T-cell (primary cell): ENCODE measurements at regions of chr12 and their contacts with region 1.

Region 1: GRCh38 chr12:51341259-51342007 is 5.0 kb downstream of the CELA1 start:
- DNase-seq: peak; percentile 33 to 86 (median 63)
- ATAC-seq: peak; percentile 87 to 95 (median 89)
- H3K4me3 ChIP-seq: no peak overlapping the region
- H3K4me3 Mint-ChIP-seq: peak overlapping the region in 2 of 3 donors; percentile 49 to 67
- H3K27ac ChIP-seq: peak overlapping the region; percentile 33
- H3K27ac Mint-ChIP-seq: peak overlapping the region; percentile 68 to 85
- H3K4me1 ChIP-seq: peaks cover 3 to 15% of the 10 kb centered on the region in 2 experiments
- H3K4me1 Mint-ChIP-seq: peaks cover 7 to 28% (median 8%) of the 10 kb centered on the region in 3 donors
- H3K27me3 ChIP-seq: peaks cover 0 to 5% of the 10 kb centered on the region in 2 experiments
- H3K27me3 Mint-ChIP-seq: no peaks in the 10 kb centered on the region

Region 2: GRCh38 chr12:50825372-50825838 is 516.0 kb before region 1 on chr12:
- CTCF ChIA-PET with region 1: interaction called in 1 of 2 experiments, 14 read pairs
- POLR2A ChIA-PET with region 1: no interaction called
- DNase-seq: peak in 1 of 35 experiments; percentile 77
- ATAC-seq: peak; percentile 59 to 93 (median 66)
- H3K4me3 ChIP-seq: no peak overlapping the region
- H3K4me3 Mint-ChIP-seq: no peak overlapping the region
- H3K27ac ChIP-seq: peak overlapping the region; percentile 65
- H3K27ac Mint-ChIP-seq: peak overlapping the region; percentile 39 to 80
- H3K4me1 ChIP-seq: peaks cover 2 to 3% of the 10 kb centered on the region in 2 experiments
- H3K4me1 Mint-ChIP-seq: peaks cover 6 to 10% (median 6%) of the 10 kb centered on the region in 3 donors
- H3K27me3 ChIP-seq: no peaks in the 10 kb centered on the region
- H3K27me3 Mint-ChIP-seq: no peaks in the 10 kb centered on the region

Region 3: DNA sequence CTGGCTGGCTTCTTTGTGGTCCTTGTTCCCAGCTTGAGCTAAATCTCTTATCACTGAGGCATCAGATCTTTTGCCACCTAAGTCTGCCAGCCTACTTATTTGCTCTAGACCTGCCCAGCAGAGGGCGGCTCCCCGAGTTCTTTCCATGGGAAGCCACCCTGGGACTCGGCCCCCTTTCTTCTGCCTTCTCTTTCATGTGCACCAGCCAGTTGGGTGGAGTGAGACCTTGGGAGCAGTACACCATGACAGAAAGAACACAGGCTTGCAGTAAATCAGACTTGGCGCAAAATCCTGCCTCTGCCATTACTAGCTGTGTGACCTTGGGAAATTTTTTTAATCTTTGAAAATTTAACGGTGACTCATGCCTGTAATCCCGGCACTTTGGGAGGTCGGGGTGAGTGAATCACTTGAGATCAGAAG is 78.7 kb before region 1 on chr12:
- CTCF ChIA-PET with region 1: interaction called, 3 to 10 read pairs
- POLR2A ChIA-PET with region 1: interaction called in 1 of 2 experiments, 3 read pairs
- DNase-seq: peak in 10 of 35 experiments; percentile 12 to 54 (median 26)
- ATAC-seq: peak in 3 of 4 experiments; percentile 38 to 55 (median 53)
- H3K4me3 ChIP-seq: no peak overlapping the region
- H3K4me3 Mint-ChIP-seq: no peak overlapping the region
- H3K27ac ChIP-seq: no peak overlapping the region
- H3K27ac Mint-ChIP-seq: no peak overlapping the region
- H3K4me1 ChIP-seq: peaks cover 0 to 3% of the 10 kb centered on the region in 2 experiments
- H3K4me1 Mint-ChIP-seq: peaks cover 16 to 24% (median 22%) of the 10 kb centered on the region in 3 donors
- H3K27me3 ChIP-seq: no peaks in the 10 kb centered on the region
- H3K27me3 Mint-ChIP-seq: no peaks in the 10 kb centered on the region

Region 4: GRCh38 chr12:51270067-51270970 is 71.1 kb before region 1 on chr12 and contains the start of gene SMAGP:
- CTCF ChIA-PET with region 1: interaction called, 3 to 30 read pairs
- POLR2A ChIA-PET with region 1: interaction called in 1 of 2 experiments, 3 read pairs
- DNase-seq: peak in 31 of 35 experiments; percentile 7 to 61 (median 30)
- ATAC-seq: peak; percentile 58 to 66 (median 61)
- H3K4me3 ChIP-seq: peak within 1 kb of the TSS; percentile 66 to 79
- H3K4me3 Mint-ChIP-seq: peak within 1 kb of the TSS; percentile 86 to 93 (median 91)
- H3K27ac ChIP-seq: peak within 1 kb of the TSS; percentile 57
- H3K27ac Mint-ChIP-seq: peak within 1 kb of the TSS; percentile 86 to 90
- H3K4me1 ChIP-seq: peaks cover 8 to 22% of the 10 kb centered on the region in 2 experiments
- H3K4me1 Mint-ChIP-seq: peaks cover 26 to 35% (median 27%) of the 10 kb centered on the region in 3 donors
- H3K27me3 ChIP-seq: no peaks in the 10 kb centered on the region
- H3K27me3 Mint-ChIP-seq: no peaks in the 10 kb centered on the region
- total RNA-seq, gene SMAGP: 3.2 to 5.3 (median 3.6) TPM

Region 5: DNA sequence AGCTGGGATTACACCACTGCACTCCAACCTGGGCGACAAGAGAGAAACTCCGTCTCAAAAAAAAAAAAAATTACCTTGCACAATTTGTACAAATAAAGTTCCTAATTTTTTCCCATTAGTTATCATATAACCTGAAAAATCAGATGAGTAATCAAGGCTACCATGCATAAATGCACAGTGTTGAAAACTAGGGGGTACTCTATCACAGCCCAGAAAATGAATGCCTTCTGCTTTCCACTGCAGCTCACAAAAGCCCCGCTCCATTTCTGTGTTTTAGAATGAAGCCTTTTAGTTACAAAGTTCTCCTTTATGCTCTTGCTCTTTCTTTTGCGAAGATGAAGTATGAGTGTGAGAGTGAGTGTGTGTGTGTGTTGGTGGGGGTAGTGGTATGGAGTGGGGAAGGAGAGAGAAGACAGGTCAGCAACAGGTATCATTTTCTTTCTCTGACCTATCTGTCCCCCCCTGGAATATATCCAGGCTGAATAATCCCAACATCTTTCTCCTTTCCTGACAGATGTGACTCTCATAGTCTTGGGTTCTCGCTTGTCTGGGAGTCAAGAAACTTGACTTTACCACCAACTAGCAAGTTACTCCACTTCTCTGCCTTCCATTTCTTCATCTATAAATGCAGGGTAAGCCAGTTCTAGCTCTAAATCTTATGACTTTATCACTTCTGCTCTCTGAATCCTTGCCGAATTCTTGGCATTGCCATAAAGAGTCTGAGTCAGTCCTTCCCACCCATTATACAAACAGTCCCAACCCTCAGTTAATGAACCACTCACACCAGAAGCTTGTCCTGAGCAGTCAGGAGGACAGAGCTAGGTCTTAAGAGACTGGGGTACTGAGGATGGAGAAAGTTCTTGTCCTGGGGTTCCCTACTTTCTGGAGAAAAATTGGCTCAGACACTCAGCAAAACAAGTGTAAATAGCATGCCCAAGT is 33.5 kb before region 1 on chr12:
- CTCF ChIA-PET with region 1: interaction called, 7 to 13 read pairs
- POLR2A ChIA-PET with region 1: interaction called in 1 of 2 experiments, 6 read pairs
- DNase-seq: peak in 1 of 35 experiments; percentile 39
- ATAC-seq: peak in 3 of 4 experiments; percentile 53 to 73 (median 55)
- H3K4me3 ChIP-seq: no peak overlapping the region
- H3K4me3 Mint-ChIP-seq: peak overlapping the region in 1 of 3 donors; percentile 6
- H3K27ac ChIP-seq: peak overlapping the region; percentile 11
- H3K27ac Mint-ChIP-seq: peak overlapping the region; percentile 87 to 89
- H3K4me1 ChIP-seq: peaks cover 9 to 37% of the 10 kb centered on the region in 2 experiments
- H3K4me1 Mint-ChIP-seq: peaks cover 62 to 75% (median 69%) of the 10 kb centered on the region in 3 donors
- H3K27me3 ChIP-seq: no peaks in the 10 kb centered on the region
- H3K27me3 Mint-ChIP-seq: no peaks in the 10 kb centered on the region

Region 6: GRCh38 chr12:51320695-51321320 is 20.6 kb before region 1 on chr12:
- CTCF ChIA-PET with region 1: interaction called, 10 to 20 read pairs
- POLR2A ChIA-PET with region 1: interaction called in 1 of 2 experiments, 8 read pairs
- DNase-seq: peak in 1 of 35 experiments; percentile 41
- ATAC-seq: no peak
- H3K4me3 ChIP-seq: peak overlapping the region; percentile 51 to 78
- H3K4me3 Mint-ChIP-seq: peak overlapping the region; percentile 96 to 98 (median 96)
- H3K27ac ChIP-seq: peak overlapping the region; percentile 93
- H3K27ac Mint-ChIP-seq: peak overlapping the region; percentile 98
- H3K4me1 ChIP-seq: peaks cover 47 to 86% of the 10 kb centered on the region in 2 experiments
- H3K4me1 Mint-ChIP-seq: peaks cover 85 to 96% (median 86%) of the 10 kb centered on the region in 3 donors
- H3K27me3 ChIP-seq: no peaks in the 10 kb centered on the region
- H3K27me3 Mint-ChIP-seq: no peaks in the 10 kb centered on the region

Region 7: GRCh38 chr12:51329742-51330141 is 11.7 kb before region 1 on chr12:
- CTCF ChIA-PET with region 1: interaction called, 3 to 10 read pairs
- POLR2A ChIA-PET with region 1: interaction called, 6 to 8 read pairs
- DNase-seq: peak in 2 of 35 experiments; percentile 14 to 33
- ATAC-seq: peak; percentile 48 to 74 (median 54)
- H3K4me3 ChIP-seq: peak overlapping the region; percentile 31 to 79
- H3K4me3 Mint-ChIP-seq: peak overlapping the region; percentile 11 to 71 (median 53)
- H3K27ac ChIP-seq: peak overlapping the region; percentile 70
- H3K27ac Mint-ChIP-seq: peak overlapping the region; percentile 87 to 89
- H3K4me1 ChIP-seq: peaks cover 44 to 61% of the 10 kb centered on the region in 2 experiments
- H3K4me1 Mint-ChIP-seq: peaks cover 64 to 78% (median 71%) of the 10 kb centered on the region in 3 donors
- H3K27me3 ChIP-seq: no peaks in the 10 kb centered on the region
- H3K27me3 Mint-ChIP-seq: no peaks in the 10 kb centered on the region